Naive thymus-derived CD8-positive, alpha-beta T cell (primary cell): ENCODE measurements at regions of chr18 and their contacts with region 1.

Region 1: GRCh38 chr18:77132371-77133050 is at the start of gene MBP:
- DNase-seq: peak; percentile 38 to 78 (median 66)
- ATAC-seq: peak; percentile 59 to 72
- H3K4me3 Mint-ChIP-seq: peak within 1 kb of the TSS; percentile 65 to 99 (median 92)
- H3K27ac Mint-ChIP-seq: peak within 1 kb of the TSS; percentile 87 to 98 (median 95)
- H3K4me1 Mint-ChIP-seq: peaks cover 31 to 61% (median 58%) of the 10 kb centered on the region in 4 donors
- H3K27me3 Mint-ChIP-seq: no peaks in the 10 kb centered on the region
- polyA plus RNA-seq, gene MBP: 89.2 to 148 (median 105) TPM

Region 2: GRCh38 chr18:77054606-77055428 is 77.7 kb before region 1 on chr18:
- POLR2A ChIA-PET with region 1: interaction called, 21 read pairs
- DNase-seq: peak; percentile 57 to 87 (median 82)
- ATAC-seq: peak; percentile 87 to 90
- H3K4me3 Mint-ChIP-seq: peak overlapping the region; percentile 59 to 90 (median 80)
- H3K27ac Mint-ChIP-seq: peak overlapping the region; percentile 87 to 100 (median 96)
- H3K4me1 Mint-ChIP-seq: peaks cover 35 to 74% (median 70%) of the 10 kb centered on the region in 4 donors
- H3K27me3 Mint-ChIP-seq: no peaks in the 10 kb centered on the region

Region 3: DNA sequence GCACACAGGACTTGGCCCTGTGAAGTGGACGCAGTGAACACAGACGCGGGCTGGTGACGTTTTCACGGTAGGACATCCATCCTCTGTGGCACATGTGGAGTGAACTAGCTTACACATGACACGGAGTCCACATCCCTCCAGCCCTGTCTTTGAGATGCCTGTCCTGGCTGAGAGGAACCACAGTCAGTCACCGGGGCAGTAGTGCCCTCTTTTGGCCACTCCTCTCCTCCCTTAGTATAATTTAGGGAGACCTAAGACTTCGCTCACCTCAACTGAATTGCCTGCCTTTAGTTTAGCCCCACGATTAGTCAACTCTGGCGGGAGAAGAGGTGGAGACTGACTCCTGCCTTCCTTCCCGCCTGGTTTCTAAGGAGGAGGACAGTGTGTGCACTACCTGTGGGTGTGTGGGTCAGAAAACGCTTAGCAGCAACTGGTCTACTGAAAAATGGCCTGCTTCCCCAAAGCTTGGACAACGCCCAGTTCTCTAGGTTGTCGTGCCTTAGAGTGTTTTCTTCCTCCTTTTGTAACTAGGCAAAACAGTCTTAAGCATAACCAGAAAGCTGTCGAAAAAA is 70.5 kb before region 1 on chr18:
- POLR2A ChIA-PET with region 1: interaction called, 43 read pairs
- DNase-seq: peak in 2 of 10 donors; percentile 44 to 71
- ATAC-seq: no peak
- H3K4me3 Mint-ChIP-seq: peak overlapping the region; percentile 54 to 80 (median 73)
- H3K27ac Mint-ChIP-seq: peak overlapping the region; percentile 94 to 100 (median 99)
- H3K4me1 Mint-ChIP-seq: peaks cover 36 to 87% (median 76%) of the 10 kb centered on the region in 4 donors
- H3K27me3 Mint-ChIP-seq: no peaks in the 10 kb centered on the region

Region 4: GRCh38 chr18:77067291-77068061 is 65.0 kb before region 1 on chr18:
- POLR2A ChIA-PET with region 1: interaction called, 43 read pairs
- DNase-seq: peak in 6 of 10 donors; percentile 18 to 60 (median 46)
- ATAC-seq: peak; percentile 9 to 30
- H3K4me3 Mint-ChIP-seq: peak overlapping the region; percentile 32 to 83 (median 72)
- H3K27ac Mint-ChIP-seq: peak overlapping the region; percentile 75 to 98 (median 94)
- H3K4me1 Mint-ChIP-seq: peaks cover 50 to 100% (median 91%) of the 10 kb centered on the region in 4 donors
- H3K27me3 Mint-ChIP-seq: no peaks in the 10 kb centered on the region

Region 5: DNA sequence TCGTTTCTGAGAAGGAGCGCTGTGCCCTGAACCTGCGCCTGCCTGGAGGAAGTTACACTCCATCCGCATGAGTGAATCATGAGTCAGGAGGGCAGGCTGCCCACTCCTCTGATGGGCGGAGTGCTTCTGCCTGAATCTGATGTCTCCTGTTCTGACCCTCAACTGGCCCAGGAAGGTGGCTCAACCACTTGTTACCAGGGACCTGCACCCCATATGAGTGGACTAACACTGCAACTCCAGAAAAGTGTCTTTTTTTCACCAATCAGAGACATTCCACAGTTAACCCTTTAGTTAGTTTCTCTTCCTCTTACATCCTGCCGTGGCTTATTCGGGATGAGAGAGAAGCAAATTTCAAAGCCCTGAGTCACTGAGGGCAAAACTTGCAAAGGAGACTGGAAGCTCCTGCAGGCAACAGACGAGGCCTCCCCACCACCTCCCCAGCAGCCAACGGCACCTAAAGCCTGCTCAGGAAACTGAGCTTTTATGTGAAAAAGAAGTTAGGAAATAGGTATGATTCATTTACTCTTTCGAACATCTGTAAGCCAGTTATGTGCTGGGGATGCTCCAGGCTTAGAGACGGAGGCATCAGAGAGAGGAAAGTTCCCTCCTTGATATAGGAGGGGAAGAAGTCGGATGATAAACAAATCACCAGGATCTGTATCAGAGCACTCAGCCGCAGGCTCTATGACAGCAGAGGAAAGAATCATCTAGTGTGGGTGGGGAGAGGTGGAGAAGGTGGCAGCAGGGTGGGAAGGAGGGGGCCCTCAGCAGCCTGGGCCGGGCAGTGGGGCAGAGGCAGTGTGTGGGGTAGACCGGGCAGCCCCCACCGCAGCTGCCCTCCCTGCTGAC is 30.9 kb before region 1 on chr18:
- POLR2A ChIA-PET with region 1: interaction called, 38 read pairs
- DNase-seq: peak in 1 of 10 donors; percentile 20
- ATAC-seq: peak; percentile 13 to 31
- H3K4me3 Mint-ChIP-seq: peak overlapping the region; percentile 63 to 89 (median 82)
- H3K27ac Mint-ChIP-seq: peak overlapping the region; percentile 96 to 99 (median 98)
- H3K4me1 Mint-ChIP-seq: peaks cover 49 to 97% (median 91%) of the 10 kb centered on the region in 4 donors
- H3K27me3 Mint-ChIP-seq: no peaks in the 10 kb centered on the region

Region 6: GRCh38 chr18:77108001-77108692 is 24.4 kb before region 1 on chr18:
- POLR2A ChIA-PET with region 1: interaction called, 28 read pairs
- DNase-seq: no peak
- ATAC-seq: no peak
- H3K4me3 Mint-ChIP-seq: peak overlapping the region; percentile 26 to 75 (median 72)
- H3K27ac Mint-ChIP-seq: peak overlapping the region; percentile 66 to 99 (median 96)
- H3K4me1 Mint-ChIP-seq: peaks cover 62 to 97% (median 94%) of the 10 kb centered on the region in 4 donors
- H3K27me3 Mint-ChIP-seq: no peaks in the 10 kb centered on the region

Region 7: DNA sequence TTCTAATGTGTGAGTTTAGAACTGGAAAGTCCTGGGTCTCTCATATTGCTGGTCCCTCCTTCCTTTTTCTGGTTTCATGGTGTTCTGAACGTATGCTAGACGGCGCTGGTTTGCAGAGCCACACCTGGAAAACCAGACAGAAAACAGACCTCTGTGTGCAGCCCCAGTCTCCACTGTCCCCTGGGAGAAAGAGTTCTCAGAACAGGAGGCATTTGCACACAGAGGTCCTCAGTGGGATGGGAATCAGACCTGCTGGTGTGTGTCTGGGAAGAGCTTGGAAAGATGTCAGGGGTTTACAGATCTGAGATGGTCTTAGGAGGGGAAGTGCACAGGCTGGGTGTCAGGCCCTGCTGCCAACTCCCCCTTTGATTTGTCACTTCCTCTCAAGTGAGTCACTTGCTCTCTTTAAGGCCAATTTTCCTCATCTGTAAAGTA is 14.9 kb after region 1 on chr18:
- POLR2A ChIA-PET with region 1: interaction called, 22 read pairs
- DNase-seq: peak in 1 of 10 donors; percentile 14
- ATAC-seq: peak; percentile 74 to 91
- H3K4me3 Mint-ChIP-seq: peak overlapping the region in 8 of 10 donors; percentile 16 to 70 (median 52)
- H3K27ac Mint-ChIP-seq: peak overlapping the region; percentile 33 to 95 (median 88)
- H3K4me1 Mint-ChIP-seq: peaks cover 15 to 43% (median 26%) of the 10 kb centered on the region in 4 donors
- H3K27me3 Mint-ChIP-seq: no peaks in the 10 kb centered on the region